GM18951 (cell line): ENCODE measurements at regions of chr1 and their contacts with region 1.

Region 1: GRCh38 chr1:65687428-65688214 is 105.1 kb upstream of the PDE4B start:
- POLR2A ChIP-seq: no peak

Region 2: DNA sequence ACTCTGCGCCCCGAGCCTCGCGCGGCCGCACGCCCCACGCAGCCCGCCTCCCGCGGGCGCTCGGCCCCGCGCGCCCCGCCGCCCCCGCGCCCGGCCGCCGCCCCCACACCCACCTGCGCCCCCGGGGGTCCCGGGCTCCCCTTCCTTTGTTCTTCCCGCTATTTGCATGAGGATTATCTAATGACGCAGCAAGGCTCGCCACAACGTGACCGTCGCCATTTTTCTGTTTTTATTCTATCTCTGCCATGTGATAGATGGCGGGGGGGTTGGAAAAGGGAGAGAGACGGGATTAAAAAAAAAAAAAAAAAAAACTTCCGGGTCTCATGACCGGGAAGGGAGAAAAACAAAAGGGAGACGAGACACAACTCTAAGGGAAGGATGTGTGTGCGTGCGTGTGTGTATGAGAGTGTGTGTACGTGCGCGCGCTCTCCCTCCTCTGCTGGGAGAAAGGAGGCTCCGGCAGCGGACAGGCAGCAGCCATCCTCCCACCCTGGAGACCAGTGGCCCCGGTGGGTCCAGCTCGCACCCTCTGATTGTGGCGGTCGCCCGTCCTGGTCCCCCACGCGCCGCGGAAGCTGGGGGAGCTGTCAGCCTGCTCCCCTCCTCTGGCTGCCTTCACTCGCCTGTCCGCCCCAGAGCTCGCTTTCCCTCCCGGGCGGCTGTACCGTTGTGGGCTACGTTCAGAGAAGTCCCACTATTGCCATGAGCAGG is 620.0 kb before region 1 on chr1:
- in situ Hi-C with region 1: loop called (anchors 25 kb)
- POLR2A ChIP-seq: no peak

Region 3: GRCh38 chr1:65209005-65209885 is 478.4 kb before region 1 on chr1:
- in situ Hi-C with region 1: loop called (anchors 25 kb)
- POLR2A ChIP-seq: no peak

Region 4: DNA sequence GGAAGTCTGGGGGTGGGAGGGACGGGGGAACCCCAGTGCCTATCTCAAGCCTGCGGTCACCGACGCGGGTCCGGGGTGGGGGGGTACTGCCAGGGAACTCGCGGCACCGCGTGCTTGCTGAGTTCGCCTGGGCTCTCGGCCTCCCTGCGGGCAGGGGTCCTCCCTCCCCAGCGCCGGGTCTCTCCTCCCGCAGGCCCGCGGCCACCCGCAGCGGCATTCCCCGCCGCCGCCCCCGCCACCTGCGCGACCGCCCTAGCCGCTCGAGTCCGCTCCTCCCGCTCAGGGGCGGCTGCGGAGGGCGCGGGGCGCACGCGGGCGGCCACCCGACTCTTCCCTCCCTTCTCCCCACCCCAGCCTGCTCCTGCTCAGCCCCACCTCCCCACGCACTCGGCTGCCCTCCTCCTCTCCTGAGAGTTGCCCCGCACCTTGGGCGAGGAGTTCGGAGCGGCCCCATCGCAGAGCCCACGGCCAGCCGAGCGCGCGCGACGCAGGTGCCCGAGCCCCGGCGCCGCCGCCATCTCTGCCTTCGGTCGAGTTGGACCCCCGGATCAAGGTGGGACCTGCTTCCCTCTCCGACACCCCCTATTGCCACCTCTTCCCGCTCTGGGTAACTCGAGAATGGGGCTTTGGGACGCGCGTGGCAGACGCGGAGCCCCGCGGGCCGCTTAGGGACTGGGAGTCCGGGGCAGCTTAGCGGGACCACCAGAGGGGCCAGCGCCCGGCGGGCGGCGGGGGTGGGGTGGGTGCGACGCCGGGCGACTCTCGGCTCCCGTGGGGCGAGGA is 162.2 kb before region 1 on chr1:
- in situ Hi-C with region 1: no loop called
- POLR2A ChIP-seq: no peak